ENCODE measurements at regions of chr19 and their contacts with region 1.

Region 1: GRCh38 chr19:13880059-13881043 is 3.4 kb downstream of the NANOS3 start:
- DNase-seq: peak; percentile 96
- ATAC-seq: peak; percentile 98
- H3K4me3 ChIP-seq: peak overlapping the region in 3 of 5 experiments; percentile 12 to 27 (median 27)
- H3K4me3 Mint-ChIP-seq: peak overlapping the region; percentile 37
- H3K27ac ChIP-seq: no peak overlapping the region
- H3K27ac Mint-ChIP-seq: peak overlapping the region; percentile 61
- H3K4me1 ChIP-seq: peaks cover 26 to 34% of the 10 kb centered on the region in 2 donors
- H3K4me1 Mint-ChIP-seq: peaks cover 25% of the 10 kb centered on the region
- H3K27me3 ChIP-seq: peaks cover 0 to 3% (median 0%) of the 10 kb centered on the region in 4 experiments
- H3K27me3 Mint-ChIP-seq: no peaks in the 10 kb centered on the region
- CTCF ChIP-seq: peak; percentile 99

Region 2: DNA sequence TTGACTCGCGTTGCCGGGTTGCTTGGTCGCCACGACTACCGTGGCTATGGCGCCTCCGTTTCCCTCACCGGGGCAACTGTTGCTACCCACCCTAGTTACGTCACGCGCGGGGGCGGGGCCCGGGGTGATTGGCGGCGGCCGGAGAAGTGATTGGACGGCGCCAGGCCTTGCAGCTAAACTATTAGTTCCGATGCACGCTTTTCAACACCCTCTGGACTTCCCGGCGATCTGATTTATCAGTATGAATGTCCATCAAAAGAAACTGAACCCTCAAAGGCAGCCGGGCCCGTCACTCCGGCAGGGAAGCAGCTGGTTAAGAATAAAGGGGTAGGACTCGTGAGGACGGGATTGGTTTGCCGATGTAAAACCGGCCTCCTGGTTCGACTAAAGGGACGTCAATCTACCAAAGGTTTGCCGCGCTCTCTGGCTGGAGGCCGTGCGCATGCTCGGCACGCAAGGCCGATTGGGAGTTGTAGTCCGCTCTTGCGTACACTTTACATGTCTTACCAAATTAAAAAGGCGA is 126.0 kb after region 1 on chr19 and contains the start of gene RFX1:
- CTCF ChIA-PET with region 1: interaction called, 4 read pairs
- POLR2A ChIA-PET with region 1: interaction called, 6 read pairs
- intact Hi-C with region 1: loop called (anchors 1 kb)
- DNase-seq: peak; percentile 99
- ATAC-seq: peak; percentile 70
- H3K4me3 ChIP-seq: peak within 1 kb of the TSS; percentile 74 to 96 (median 82)
- H3K4me3 Mint-ChIP-seq: peak within 1 kb of the TSS; percentile 90
- H3K27ac ChIP-seq: peak within 1 kb of the TSS; percentile 99 to 100
- H3K27ac Mint-ChIP-seq: peak within 1 kb of the TSS; percentile 97
- H3K4me1 ChIP-seq: peaks cover 42 to 48% of the 10 kb centered on the region in 2 donors
- H3K4me1 Mint-ChIP-seq: peaks cover 46% of the 10 kb centered on the region
- H3K27me3 ChIP-seq: no peaks in the 10 kb centered on the region
- H3K27me3 Mint-ChIP-seq: no peaks in the 10 kb centered on the region
- CTCF ChIP-seq: no peak
- total RNA-seq, gene RFX1: 33.3 and 33.9 TPM in 2 replicates

Region 3: DNA sequence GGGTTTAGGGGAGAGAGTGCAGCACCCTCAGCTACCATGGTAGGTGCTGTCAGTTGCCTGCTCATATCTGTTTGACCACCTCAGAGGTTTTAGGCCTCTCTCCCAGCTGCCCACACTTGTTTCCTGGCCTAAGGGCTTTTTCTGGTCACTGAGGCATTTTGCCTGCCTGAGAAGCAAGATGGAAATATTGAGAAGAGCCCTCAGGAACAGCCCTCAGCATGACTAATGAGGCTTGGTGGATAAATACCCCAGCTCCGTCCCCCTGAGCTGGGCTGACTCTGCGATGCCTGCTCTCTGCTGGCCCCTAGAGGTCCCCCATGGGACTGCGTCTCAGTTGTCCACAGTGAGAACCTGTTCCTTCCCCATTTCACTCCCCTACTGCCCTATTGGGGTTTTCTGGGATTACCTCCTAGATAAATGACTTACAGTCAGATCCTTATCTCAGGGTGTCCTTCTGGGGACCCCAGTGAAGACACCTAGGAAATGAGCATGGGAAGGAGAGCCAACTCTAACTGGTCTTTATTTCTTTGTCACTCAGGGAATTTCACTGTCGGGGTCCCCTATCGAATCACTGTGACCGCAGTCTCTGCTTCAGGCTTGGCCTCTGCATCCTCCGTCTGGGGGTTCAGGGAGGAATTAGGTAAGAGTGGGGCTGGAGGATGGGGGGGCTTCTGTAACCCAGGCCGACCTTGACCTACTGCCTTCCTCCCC is 168.2 kb after region 1 on chr19:
- CTCF ChIA-PET with region 1: interaction called, 29 read pairs
- POLR2A ChIA-PET with region 1: interaction called, 9 read pairs
- intact Hi-C with region 1: loop called (anchors 1 kb)
- DNase-seq: peak; percentile 80
- ATAC-seq: peak; percentile 92
- H3K4me3 ChIP-seq: no peak overlapping the region
- H3K4me3 Mint-ChIP-seq: no peak overlapping the region
- H3K27ac ChIP-seq: no peak overlapping the region
- H3K27ac Mint-ChIP-seq: no peak overlapping the region
- H3K4me1 ChIP-seq: no peaks in the 10 kb centered on the region
- H3K4me1 Mint-ChIP-seq: no peaks in the 10 kb centered on the region
- H3K27me3 ChIP-seq: no peaks in the 10 kb centered on the region
- H3K27me3 Mint-ChIP-seq: no peaks in the 10 kb centered on the region
- CTCF ChIP-seq: peak; percentile 95

Region 4: GRCh38 chr19:14073261-14073924 is 193.0 kb after region 1 on chr19:
- CTCF ChIA-PET with region 1: interaction called, 92 read pairs
- POLR2A ChIA-PET with region 1: interaction called, 6 read pairs
- intact Hi-C with region 1: no loop called
- DNase-seq: peak; percentile 92
- ATAC-seq: peak; percentile 64
- H3K4me3 ChIP-seq: peak overlapping the region; percentile 47 to 79 (median 59)
- H3K4me3 Mint-ChIP-seq: peak overlapping the region; percentile 87
- H3K27ac ChIP-seq: no peak overlapping the region
- H3K27ac Mint-ChIP-seq: peak overlapping the region; percentile 34
- H3K4me1 ChIP-seq: peaks cover 31 to 35% of the 10 kb centered on the region in 2 donors
- H3K4me1 Mint-ChIP-seq: peaks cover 26% of the 10 kb centered on the region
- H3K27me3 ChIP-seq: peaks cover 0 to 18% (median 5%) of the 10 kb centered on the region in 4 experiments
- H3K27me3 Mint-ChIP-seq: peaks cover 5% of the 10 kb centered on the region
- CTCF ChIP-seq: peak; percentile 44

Region 5: GRCh38 chr19:14117668-14118164 is 237.4 kb after region 1 on chr19 and contains the start of gene PRKACA:
- CTCF ChIA-PET with region 1: interaction called, 3 read pairs
- POLR2A ChIA-PET with region 1: no interaction called
- intact Hi-C with region 1: loop called (anchors 1 kb)
- DNase-seq: peak; percentile 98
- ATAC-seq: peak; percentile 93
- H3K4me3 ChIP-seq: peak within 1 kb of the TSS; percentile 54 to 74 (median 66)
- H3K4me3 Mint-ChIP-seq: peak within 1 kb of the TSS; percentile 94
- H3K27ac ChIP-seq: peak within 1 kb of the TSS; percentile 24 to 77
- H3K27ac Mint-ChIP-seq: peak within 1 kb of the TSS; percentile 87
- H3K4me1 ChIP-seq: peaks cover 36 to 38% of the 10 kb centered on the region in 2 donors
- H3K4me1 Mint-ChIP-seq: peaks cover 39% of the 10 kb centered on the region
- H3K27me3 ChIP-seq: no peaks in the 10 kb centered on the region
- H3K27me3 Mint-ChIP-seq: no peaks in the 10 kb centered on the region
- CTCF ChIP-seq: no peak
- total RNA-seq, gene PRKACA: 43.0 and 48.8 TPM in 2 replicates

Measured in B cell (primary cell).